ENCODE measurements at regions of chrX and their contacts with region 1.

Region 1: GRCh38 chrX:30504309-30504708 is 73.3 kb downstream of the TASL start:
- DNase-seq: peak in 4 of 9 donors; percentile 1 to 18 (median 2)
- ATAC-seq: no peak
- H3K4me3 ChIP-seq: no peak overlapping the region
- H3K4me3 Mint-ChIP-seq: no peak overlapping the region
- H3K27ac ChIP-seq: no peak overlapping the region
- H3K27ac Mint-ChIP-seq: no peak overlapping the region
- H3K4me1 ChIP-seq: no peaks in the 10 kb centered on the region
- H3K4me1 Mint-ChIP-seq: no peaks in the 10 kb centered on the region
- H3K27me3 ChIP-seq: no peaks in the 10 kb centered on the region
- H3K27me3 Mint-ChIP-seq: peaks cover 0 to 13% (median 0%) of the 10 kb centered on the region in 5 donors

Region 2: GRCh38 chrX:30141966-30142365 is 362.3 kb before region 1 on chrX:
- CTCF ChIA-PET with region 1: no interaction called
- POLR2A ChIA-PET with region 1: no interaction called
- intact Hi-C with region 1: loop called in 1 of 2 experiments (anchors 5 kb)
- DNase-seq: no peak
- ATAC-seq: no peak
- H3K4me3 ChIP-seq: no peak overlapping the region
- H3K4me3 Mint-ChIP-seq: no peak overlapping the region
- H3K27ac ChIP-seq: no peak overlapping the region
- H3K27ac Mint-ChIP-seq: no peak overlapping the region
- H3K4me1 ChIP-seq: no peaks in the 10 kb centered on the region
- H3K4me1 Mint-ChIP-seq: no peaks in the 10 kb centered on the region
- H3K27me3 ChIP-seq: no peaks in the 10 kb centered on the region
- H3K27me3 Mint-ChIP-seq: no peaks in the 10 kb centered on the region

Region 3: DNA sequence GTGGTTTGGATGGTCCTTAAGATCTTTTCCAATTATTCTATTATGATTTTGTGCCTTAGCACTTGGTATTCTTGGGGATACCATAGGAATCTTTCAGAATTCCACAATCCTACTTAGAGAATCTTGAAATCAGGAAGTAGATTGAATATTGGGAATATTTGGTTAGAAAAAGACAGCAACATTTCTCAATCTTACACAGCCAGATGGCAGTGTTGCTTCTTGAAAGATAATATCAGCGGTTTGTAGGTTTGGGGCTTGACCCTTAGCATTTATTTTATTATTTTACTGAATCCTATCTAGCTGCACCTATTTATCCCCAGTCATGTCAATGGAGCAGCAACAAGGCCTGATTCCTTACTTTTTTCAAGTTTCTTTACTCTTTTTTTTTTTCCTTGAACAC is 228.8 kb before region 1 on chrX:
- CTCF ChIA-PET with region 1: no interaction called
- POLR2A ChIA-PET with region 1: no interaction called
- intact Hi-C with region 1: loop called in 1 of 2 experiments (anchors 5 kb)
- DNase-seq: no peak
- ATAC-seq: no peak
- H3K4me3 ChIP-seq: no peak overlapping the region
- H3K4me3 Mint-ChIP-seq: no peak overlapping the region
- H3K27ac ChIP-seq: no peak overlapping the region
- H3K27ac Mint-ChIP-seq: no peak overlapping the region
- H3K4me1 ChIP-seq: no peaks in the 10 kb centered on the region
- H3K4me1 Mint-ChIP-seq: peaks cover 0 to 14% (median 7%) of the 10 kb centered on the region in 7 donors
- H3K27me3 ChIP-seq: no peaks in the 10 kb centered on the region
- H3K27me3 Mint-ChIP-seq: no peaks in the 10 kb centered on the region

Region 4: GRCh38 chrX:30488092-30488491 is 16.2 kb before region 1 on chrX:
- CTCF ChIA-PET with region 1: no interaction called
- POLR2A ChIA-PET with region 1: no interaction called
- intact Hi-C with region 1: no loop called
- DNase-seq: no peak
- ATAC-seq: no peak
- H3K4me3 ChIP-seq: no peak overlapping the region
- H3K4me3 Mint-ChIP-seq: no peak overlapping the region
- H3K27ac ChIP-seq: no peak overlapping the region
- H3K27ac Mint-ChIP-seq: no peak overlapping the region
- H3K4me1 ChIP-seq: no peaks in the 10 kb centered on the region
- H3K4me1 Mint-ChIP-seq: no peaks in the 10 kb centered on the region
- H3K27me3 ChIP-seq: no peaks in the 10 kb centered on the region
- H3K27me3 Mint-ChIP-seq: no peaks in the 10 kb centered on the region

Measured in naive thymus-derived CD4-positive, alpha-beta T cell (primary cell).